PC-9 (cell line): ENCODE measurements at regions of chr17 and their contacts with region 1.

Region 1: DNA sequence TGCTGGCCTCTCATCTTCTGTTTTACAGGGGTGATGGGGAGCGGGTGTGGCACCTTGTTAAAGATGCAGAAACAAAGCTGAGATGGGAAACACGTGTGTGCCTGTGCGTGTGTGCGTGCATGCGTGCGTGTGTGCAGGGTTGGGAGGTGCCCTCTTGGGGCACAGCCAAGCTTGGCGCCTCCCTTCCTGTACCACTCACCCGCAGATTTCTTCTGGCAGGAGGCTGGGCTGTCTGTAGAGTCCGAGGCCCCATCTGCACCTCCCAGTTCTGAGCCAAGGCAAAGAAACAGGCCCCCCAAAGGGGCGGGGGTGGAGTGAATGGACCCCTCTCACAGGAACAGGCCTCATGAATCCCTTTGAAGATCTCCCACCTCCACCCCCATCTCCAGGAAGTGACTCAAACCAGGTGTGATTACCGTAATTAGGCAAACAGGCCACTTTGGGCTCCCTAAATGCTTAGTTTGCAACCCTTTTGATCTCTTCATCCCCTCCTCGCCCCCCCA is 20.9 kb downstream of the TNS4 start:
- DNase-seq: no peak
- H3K4me3 ChIP-seq: no peak overlapping the region
- H3K27ac ChIP-seq: no peak overlapping the region
- H3K4me1 ChIP-seq: peaks cover 49% of the 10 kb centered on the region
- H3K27me3 ChIP-seq: no peaks in the 10 kb centered on the region
- CTCF ChIP-seq: no peak

Region 2: GRCh38 chr17:40177275-40177874 is 303.2 kb before region 1 on chr17 and contains the start of gene RAPGEFL1:
- CTCF ChIA-PET with region 1: no interaction called
- POLR2A ChIA-PET with region 1: interaction called, 11 read pairs
- intact Hi-C with region 1: no loop called
- DNase-seq: peak; percentile 41 to 64
- H3K4me3 ChIP-seq: peak within 1 kb of the TSS; percentile 81; the same call in 1 of the 2 replicates
- H3K27ac ChIP-seq: no peak within 1 kb of the TSS
- H3K4me1 ChIP-seq: peaks cover 62% of the 10 kb centered on the region
- H3K27me3 ChIP-seq: no peaks in the 10 kb centered on the region
- CTCF ChIP-seq: no peak
- total RNA-seq, gene RAPGEFL1: 14.0 and 14.9 TPM in 2 replicates

Region 3: GRCh38 chr17:40287494-40288369 is 192.8 kb before region 1 on chr17 and contains the start of gene CDC6:
- CTCF ChIA-PET with region 1: no interaction called
- POLR2A ChIA-PET with region 1: no interaction called
- intact Hi-C with region 1: no loop called
- DNase-seq: peak; percentile 94 to 98
- H3K4me3 ChIP-seq: peak within 1 kb of the TSS; percentile 87
- H3K27ac ChIP-seq: peak within 1 kb of the TSS; percentile 66
- H3K4me1 ChIP-seq: peaks cover 60% of the 10 kb centered on the region
- H3K27me3 ChIP-seq: no peaks in the 10 kb centered on the region
- CTCF ChIP-seq: no peak
- total RNA-seq, gene CDC6: 37.8 and 44.9 TPM in 2 replicates

Region 4: DNA sequence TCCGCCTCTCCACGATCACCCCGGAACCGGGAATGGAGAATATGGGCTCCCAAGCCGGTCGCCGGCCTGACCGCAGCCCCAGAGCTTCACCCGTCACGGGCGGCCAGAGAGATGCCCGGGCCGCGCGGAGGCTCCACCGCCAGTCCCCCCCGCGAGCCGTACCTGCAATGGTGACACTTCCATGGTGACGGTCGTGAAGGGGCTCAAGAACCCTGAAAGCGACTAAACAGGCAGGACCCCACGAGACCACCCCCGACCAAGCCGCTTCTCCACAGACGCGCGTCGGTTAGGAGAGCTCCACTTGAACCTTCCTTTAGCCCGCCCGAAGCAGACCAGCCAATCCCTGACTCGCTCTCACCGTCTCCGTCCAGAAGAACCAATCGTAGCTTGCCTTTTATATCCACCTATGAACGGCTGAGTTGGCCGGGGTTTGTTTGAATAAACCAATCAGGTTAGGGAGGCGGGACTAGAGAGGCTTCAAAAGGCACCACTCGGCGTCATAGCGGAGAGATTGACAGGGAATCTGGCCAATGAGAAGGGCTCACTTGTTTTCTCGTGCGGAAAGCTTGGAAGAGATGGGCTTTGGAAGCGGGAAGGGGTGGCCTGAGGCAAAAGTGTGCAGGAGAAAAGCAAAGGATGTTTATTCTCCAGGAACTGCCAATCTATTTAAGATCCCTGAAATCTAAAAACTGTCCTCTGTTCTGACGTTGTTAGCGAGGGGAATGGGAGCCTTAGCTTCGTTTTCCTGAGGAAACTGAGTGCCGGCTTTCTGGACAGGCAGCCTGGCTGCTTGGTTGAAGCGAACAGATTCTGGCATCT is 62.7 kb before region 1 on chr17 and contains the start of gene TOP2A:
- CTCF ChIA-PET with region 1: no interaction called
- POLR2A ChIA-PET with region 1: interaction called, 17 read pairs
- intact Hi-C with region 1: no loop called
- DNase-seq: peak; percentile 96 to 98
- H3K4me3 ChIP-seq: peak within 1 kb of the TSS; percentile 93
- H3K27ac ChIP-seq: no peak within 1 kb of the TSS
- H3K4me1 ChIP-seq: peaks cover 33% of the 10 kb centered on the region
- H3K27me3 ChIP-seq: no peaks in the 10 kb centered on the region
- CTCF ChIP-seq: no peak
- total RNA-seq, gene TOP2A: 156 and 235 TPM in 2 replicates

Region 5: GRCh38 chr17:40551879-40552768 is 71.6 kb after region 1 on chr17:
- CTCF ChIA-PET with region 1: interaction called, 11 read pairs
- POLR2A ChIA-PET with region 1: no interaction called
- intact Hi-C with region 1: no loop called
- DNase-seq: no peak
- H3K4me3 ChIP-seq: no peak overlapping the region
- H3K27ac ChIP-seq: peak overlapping the region; percentile 40
- H3K4me1 ChIP-seq: peaks cover 51% of the 10 kb centered on the region
- H3K27me3 ChIP-seq: no peaks in the 10 kb centered on the region
- CTCF ChIP-seq: no peak

Region 6: DNA sequence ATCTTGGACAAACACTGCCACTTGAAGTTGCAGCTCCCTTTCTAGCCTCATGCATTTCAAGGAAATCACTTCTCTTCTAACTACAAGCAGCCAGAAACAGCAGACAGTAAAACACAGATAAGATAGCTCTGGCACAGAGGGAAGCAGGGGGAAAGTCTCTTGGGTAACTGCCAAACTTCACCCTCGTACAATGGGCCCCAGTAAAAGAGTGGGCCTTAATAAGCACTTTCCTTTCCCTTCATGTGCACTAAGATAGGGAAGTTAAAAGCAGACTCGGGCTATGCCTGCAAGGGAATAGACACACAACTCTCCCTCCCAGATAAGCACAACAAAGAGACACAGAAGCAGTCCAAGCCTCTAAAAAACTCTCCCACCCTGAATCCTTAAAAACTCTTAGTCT is 673.3 kb after region 1 on chr17:
- CTCF ChIA-PET with region 1: no interaction called
- POLR2A ChIA-PET with region 1: no interaction called
- intact Hi-C with region 1: no loop called
- DNase-seq: no peak
- H3K4me3 ChIP-seq: no peak overlapping the region
- H3K27ac ChIP-seq: no peak overlapping the region
- H3K4me1 ChIP-seq: no peaks in the 10 kb centered on the region
- H3K27me3 ChIP-seq: no peaks in the 10 kb centered on the region
- CTCF ChIP-seq: no peak